AG04449 (cell line): ENCODE measurements at regions of chr3 and their contacts with region 1.

Region 1: DNA sequence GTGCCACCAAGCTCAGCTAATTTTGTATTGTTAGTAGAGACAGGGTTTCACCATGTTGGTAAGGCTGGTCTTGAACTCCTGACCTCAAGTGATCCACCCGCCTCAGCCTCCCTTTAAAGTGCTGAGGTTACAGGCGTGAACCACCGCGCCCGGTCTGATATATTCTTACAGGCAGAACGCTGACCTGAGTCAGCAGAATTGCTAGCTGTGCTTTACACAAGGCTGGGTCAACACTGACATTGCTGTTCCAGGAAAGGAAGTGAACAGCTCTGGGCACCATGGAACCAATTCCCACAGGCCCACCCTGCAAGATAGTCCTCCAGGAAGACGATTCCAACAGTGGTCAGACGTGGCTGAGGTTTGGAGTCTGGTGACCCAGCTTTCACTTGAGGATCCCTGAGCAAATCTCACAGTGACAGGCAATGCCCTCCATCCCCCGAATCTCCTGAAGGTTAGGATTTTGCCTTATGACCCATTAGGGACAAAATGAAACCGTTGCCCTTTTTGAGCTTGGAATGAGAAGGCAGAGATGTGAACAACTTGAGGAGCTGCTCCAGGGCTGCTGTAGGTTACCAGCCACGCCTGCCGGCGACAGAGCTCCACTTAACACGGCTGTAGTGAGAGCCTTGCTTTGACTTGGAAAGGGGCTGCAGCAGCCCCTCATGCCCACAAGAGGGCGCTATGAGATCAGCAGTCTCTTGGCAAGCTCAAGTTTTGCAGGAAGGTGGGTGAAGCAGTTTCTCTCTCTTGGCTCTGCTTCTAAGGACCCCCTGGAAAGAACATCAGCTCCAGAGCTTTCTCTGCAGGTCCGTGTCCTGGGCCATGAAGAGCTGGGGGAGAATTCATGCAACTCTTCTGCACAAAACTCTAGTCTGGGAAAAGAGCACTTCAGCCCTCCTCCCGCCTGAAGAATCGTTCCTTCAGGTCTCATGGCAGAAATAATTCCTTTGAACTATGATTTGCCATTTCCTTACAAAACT is 74.1 kb downstream of the SENP2 start:
- DNase-seq: peak; percentile 44
- H3K4me3 ChIP-seq: no peak overlapping the region
- CTCF ChIP-seq: peak; percentile 95

Region 2: DNA sequence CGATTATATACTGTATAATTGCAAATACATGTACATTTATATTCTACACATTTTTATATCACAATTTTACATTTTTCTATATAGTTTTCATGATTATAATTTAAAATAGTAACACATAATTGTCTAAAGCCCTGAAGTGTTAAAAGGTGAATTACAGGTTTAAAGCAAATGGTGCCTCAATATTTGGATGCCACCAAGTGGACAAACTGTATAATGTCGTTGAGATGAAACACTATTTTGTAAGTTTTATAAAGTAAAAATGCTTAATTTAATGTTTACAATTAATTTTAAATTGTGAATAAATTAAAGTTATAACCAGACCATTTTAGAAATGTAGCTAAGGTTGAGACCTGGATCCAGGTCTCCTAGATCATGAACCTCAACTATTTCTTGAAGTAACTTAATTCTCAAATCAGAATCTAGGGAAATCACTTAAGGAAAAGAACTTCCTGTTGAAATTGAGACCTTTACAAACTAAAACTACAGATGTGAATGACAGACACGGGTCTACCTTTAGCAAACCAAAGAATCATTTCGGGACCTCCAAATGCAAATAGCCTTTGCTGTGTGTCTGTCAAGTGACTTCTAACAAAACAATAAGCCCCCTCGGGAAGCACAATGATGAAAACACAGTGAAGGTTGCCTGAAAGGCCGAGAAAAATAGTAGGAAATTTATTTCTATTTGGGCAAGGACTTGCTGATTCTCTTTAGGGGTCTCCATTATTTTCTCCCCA is 444.2 kb before region 1 on chr3:
- CTCF ChIA-PET with region 1: no interaction called
- POLR2A ChIA-PET with region 1: no interaction called
- DNase-seq: no peak
- H3K4me3 ChIP-seq: no peak overlapping the region
- CTCF ChIP-seq: peak; percentile 35

Region 3: GRCh38 chr3:185687271-185687878 is 27.1 kb after region 1 on chr3:
- CTCF ChIA-PET with region 1: interaction called, 17 read pairs
- POLR2A ChIA-PET with region 1: no interaction called
- DNase-seq: no peak
- H3K4me3 ChIP-seq: no peak overlapping the region
- CTCF ChIP-seq: no peak

Region 4: DNA sequence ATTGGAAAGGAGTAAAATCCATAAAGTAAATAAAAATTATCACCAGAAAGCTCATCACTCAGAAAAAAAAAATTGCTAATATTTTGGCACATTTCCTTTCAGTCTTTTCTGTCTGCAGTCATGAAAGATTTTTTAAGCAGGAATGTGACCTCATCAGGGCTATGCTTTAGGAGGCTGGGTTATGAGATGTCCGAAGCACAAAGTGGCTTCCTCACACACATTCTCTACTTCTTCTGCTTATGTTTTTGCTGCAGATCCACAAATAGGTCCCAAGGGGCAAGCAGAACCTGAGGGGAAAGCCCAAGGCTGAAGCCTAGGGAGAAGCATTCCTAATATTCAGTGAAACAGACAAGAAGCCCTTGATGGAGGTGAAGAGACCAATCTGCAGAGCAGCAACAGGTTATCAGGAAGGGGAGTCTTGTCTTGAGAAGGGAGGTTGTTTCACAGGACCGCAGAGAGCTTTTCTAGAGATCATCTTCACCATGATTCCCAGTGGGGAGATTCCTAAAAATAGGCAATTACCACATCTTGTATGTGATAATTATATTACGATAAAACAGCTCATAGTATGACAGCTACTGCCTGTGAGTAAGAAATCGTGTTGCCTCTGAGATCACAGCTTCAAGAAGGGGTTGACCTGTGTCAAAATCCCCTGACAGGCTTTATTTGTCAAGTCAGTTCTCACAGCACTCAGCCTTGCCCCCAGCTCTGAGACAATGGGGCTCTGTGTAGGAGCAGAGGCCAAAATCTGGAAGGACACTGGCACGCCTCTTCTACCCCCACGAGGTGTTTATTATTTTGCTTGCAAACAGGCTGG is 104.1 kb after region 1 on chr3:
- CTCF ChIA-PET with region 1: interaction called, 68 read pairs
- POLR2A ChIA-PET with region 1: no interaction called
- DNase-seq: no peak
- H3K4me3 ChIP-seq: no peak overlapping the region
- CTCF ChIP-seq: no peak

Region 5: GRCh38 chr3:185815391-185816282 is 155.4 kb after region 1 on chr3:
- CTCF ChIA-PET with region 1: interaction called, 35 read pairs
- POLR2A ChIA-PET with region 1: no interaction called
- DNase-seq: no peak
- H3K4me3 ChIP-seq: no peak overlapping the region
- CTCF ChIP-seq: no peak

Region 6: GRCh38 chr3:185912929-185913901 is 253.0 kb after region 1 on chr3:
- CTCF ChIA-PET with region 1: interaction called, 35 read pairs
- POLR2A ChIA-PET with region 1: no interaction called
- DNase-seq: no peak
- H3K4me3 ChIP-seq: no peak overlapping the region
- CTCF ChIP-seq: no peak

Region 7: DNA sequence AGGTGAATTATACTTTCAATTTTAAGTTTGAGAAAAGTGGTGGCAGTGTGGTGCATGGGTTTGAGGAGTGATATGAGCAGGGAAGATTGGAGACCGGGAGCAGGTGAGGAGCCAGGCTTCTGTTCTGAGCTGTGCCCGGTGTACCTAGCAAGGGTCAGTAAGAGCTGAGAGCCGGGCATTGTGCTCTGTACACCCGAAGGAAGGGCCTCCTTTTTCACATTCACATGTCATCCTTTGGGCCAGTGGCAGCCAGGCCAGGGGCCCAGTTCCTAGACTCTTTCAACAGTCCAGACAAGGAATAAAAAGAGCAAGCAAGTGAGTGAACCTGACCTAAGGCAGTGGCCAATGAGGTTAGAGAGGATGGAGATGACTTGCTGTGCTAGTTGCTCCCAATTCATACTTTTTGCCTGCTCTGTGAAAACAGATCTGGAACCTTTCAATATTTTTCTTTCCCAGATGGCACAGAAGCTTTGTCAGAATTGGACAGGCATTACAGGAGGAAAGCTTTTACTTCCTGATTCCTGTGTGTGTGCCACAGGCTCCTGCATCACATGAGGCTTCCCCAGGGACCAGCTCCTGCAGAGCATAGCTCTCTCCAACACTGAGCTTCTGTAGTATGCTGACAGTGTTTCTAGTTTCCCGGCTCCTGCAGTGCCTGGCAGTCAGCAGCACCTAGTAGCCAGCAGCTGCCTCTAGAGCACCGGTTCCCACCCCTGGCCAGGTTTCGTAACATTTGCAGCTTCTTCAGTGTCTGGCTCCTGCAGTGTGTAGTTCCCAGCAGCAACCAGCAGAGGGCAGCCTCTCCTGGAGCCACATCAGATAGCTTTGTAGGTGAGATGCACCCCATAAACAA is 282.9 kb after region 1 on chr3:
- CTCF ChIA-PET with region 1: interaction called, 59 read pairs
- POLR2A ChIA-PET with region 1: interaction called, 7 read pairs
- DNase-seq: peak; percentile 23
- H3K4me3 ChIP-seq: no peak overlapping the region
- CTCF ChIP-seq: peak; percentile 96